Head of caudate nucleus (tissue), 42 donors: ENCODE measurements at regions of chr1 and their contacts with region 1.

Region 1: GRCh38 chr1:154419620-154420571 is 14.8 kb downstream of the IL6R start:
- DNase-seq: peak; percentile 41 to 92 (median 72)

Region 2: GRCh38 chr1:154474802-154475201 is 54.9 kb after region 1 on chr1:
- intact Hi-C with region 1: loop called (anchors 5 kb)
- DNase-seq: peak; percentile 37 to 95 (median 88)

Region 3: DNA sequence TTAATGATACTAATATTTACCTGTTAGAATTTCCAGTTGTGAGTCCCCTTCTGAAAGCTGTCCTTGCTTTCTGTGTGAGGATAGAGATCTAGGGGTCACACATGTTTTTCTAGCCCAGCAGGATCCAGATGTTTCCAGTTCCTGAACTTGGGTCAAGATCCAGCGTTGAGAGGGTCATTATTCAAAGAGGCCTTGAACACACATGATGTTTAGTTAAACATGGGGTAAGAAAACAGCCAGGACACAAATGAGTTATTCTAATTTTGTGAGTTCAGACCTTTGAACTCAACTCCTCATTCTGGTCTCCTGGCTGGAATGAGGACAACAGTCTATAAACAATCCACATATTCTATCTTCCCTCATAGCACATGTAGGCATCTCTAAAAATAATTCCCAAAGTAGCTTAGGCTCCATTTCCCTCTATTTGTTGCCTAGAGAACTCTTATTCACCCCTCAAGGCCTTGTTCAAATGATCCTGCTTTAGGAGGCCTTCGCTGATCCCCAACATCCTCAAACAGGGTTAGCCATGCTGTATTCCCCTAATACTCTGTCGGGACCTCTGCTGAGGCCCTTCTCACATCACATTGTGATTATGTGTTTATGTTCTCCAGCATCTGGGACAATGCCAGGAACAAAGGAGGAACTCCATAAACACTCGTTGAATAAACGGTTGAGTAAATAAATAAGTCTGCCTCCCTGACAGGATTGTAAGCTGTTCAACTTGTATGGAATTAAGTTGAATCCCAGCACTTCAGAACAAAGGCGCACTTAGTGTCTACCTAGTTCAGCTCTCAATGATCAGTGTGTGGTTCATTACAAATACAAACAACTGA is 465.2 kb after region 1 on chr1:
- intact Hi-C with region 1: no loop called
- DNase-seq: no peak